Spleen (tissue), 13 donors: ENCODE measurements at regions of chr5 and their contacts with region 1.

Region 1: DNA sequence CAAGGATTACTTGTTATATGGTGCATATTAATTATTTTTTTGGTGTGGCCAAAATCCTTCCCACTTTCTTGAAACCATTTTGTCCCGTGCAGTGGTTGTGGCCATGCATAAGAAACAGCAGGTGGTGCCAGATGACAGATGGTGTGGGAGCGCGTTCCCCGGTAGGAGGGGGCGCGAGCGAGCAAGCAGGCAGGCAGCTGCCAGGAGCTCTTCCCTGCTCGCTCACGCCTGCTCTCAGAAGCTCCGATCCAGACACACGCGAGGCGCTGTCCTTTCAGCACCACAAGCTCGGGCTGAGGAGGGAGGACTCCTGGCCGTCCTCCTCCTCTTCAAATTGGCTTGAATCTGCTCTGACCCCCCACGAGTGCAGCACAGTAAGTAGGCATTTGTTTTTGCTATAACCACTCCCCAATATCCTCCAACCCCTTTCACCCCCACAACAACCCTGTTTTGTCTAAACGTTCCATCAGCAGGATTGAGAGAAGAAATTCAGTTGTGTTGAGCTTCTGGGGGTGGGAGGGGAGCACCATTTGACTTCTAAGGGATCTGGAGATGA is at the start of gene NSG2:
- DNase-seq: no peak
- H3K4me3 ChIP-seq: no peak within 1 kb of the TSS
- H3K27ac ChIP-seq: no peak within 1 kb of the TSS
- H3K4me1 ChIP-seq: no peaks in the 10 kb centered on the region
- H3K27me3 ChIP-seq: peaks cover 0 to 59% (median 0%) of the 10 kb centered on the region in 7 donors
- CTCF ChIP-seq: peak in 8 of 11 experiments; percentile 18 to 52 (median 32)
- POLR2A ChIP-seq: no peak
- total RNA-seq, gene NSG2: 0.41 to 0.60 TPM in 2 of 7 donors, not detected in the others

Region 2: DNA sequence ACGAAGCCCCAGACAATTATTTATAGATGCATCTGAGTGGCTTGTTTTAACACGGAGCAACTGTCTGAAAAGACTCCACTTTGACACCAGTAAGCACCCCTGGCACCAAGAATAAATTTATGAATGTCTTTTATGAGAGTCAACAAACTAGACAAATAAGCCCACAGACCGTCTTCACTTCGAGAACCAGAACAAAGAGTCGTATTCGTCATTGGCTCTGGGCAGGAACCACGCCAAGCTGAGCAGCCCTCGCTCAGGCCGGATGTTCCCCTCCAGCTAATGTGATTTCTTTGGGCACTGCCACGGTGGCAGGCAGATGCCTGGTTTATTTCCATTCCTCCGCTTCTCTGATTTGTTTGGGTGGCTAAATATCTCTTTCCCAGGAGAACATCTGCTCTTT is 625.4 kb before region 1 on chr5:
- intact Hi-C with region 1: no loop called
- DNase-seq: no peak
- H3K4me3 ChIP-seq: no peak overlapping the region
- H3K27ac ChIP-seq: no peak overlapping the region
- H3K4me1 ChIP-seq: no peaks in the 10 kb centered on the region
- H3K27me3 ChIP-seq: no peaks in the 10 kb centered on the region
- CTCF ChIP-seq: no peak
- POLR2A ChIP-seq: no peak

Region 3: GRCh38 chr5:174204535-174205313 is 159.2 kb after region 1 on chr5:
- intact Hi-C with region 1: no loop called
- DNase-seq: no peak
- H3K4me3 ChIP-seq: no peak overlapping the region
- H3K27ac ChIP-seq: no peak overlapping the region
- H3K4me1 ChIP-seq: no peaks in the 10 kb centered on the region
- H3K27me3 ChIP-seq: peaks cover 0 to 14% (median 0%) of the 10 kb centered on the region in 7 donors
- CTCF ChIP-seq: no peak
- POLR2A ChIP-seq: no peak

Region 4: GRCh38 chr5:174222891-174223290 is 177.3 kb after region 1 on chr5:
- intact Hi-C with region 1: no loop called
- DNase-seq: no peak
- H3K4me3 ChIP-seq: no peak overlapping the region
- H3K27ac ChIP-seq: no peak overlapping the region
- H3K4me1 ChIP-seq: no peaks in the 10 kb centered on the region
- H3K27me3 ChIP-seq: peaks cover 0 to 24% (median 0%) of the 10 kb centered on the region in 7 donors
- CTCF ChIP-seq: no peak
- POLR2A ChIP-seq: no peak

Region 5: DNA sequence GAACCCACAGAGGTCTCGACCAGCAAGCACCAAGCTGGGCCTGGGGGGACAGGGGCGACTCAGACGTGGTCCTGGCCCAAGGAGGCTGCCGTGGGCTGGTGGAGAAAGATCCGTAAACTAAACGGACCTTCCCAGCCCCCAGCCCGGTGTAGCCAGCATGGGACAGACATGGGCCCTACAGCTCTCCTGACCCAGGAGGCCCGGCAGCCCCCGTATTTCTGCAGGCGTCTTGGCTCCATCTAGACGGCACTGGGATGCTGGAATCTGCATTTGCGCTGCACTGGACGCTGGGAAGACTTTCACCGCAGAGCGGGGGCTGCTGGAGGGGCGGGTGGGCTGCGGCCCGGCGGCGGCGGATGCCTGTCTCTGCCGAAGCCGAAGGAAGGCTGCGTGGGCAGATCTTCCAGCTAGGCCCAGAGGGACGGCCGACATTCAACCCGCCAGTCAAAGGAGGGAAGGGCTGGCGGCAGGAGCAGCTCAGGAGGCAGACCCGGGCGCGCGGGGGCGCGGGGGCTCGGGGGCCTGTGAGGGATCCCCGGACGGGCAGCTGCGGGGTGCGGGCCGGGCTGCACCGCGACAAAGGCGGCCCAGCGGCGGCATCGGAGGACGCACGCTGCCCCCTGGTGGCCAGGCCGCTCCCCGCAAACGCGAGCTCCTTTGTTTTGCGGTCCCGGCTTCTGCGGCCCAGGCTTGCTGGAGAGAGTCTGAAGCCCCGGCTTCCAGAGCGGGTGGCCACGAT is 266.2 kb after region 1 on chr5:
- intact Hi-C with region 1: loop called (anchors 5 kb)
- DNase-seq: peak; percentile 86
- H3K4me3 ChIP-seq: peak overlapping the region in 6 of 8 donors; percentile 5 to 62 (median 28)
- H3K27ac ChIP-seq: no peak overlapping the region
- H3K4me1 ChIP-seq: peaks cover 0 to 12% (median 9%) of the 10 kb centered on the region in 6 donors
- H3K27me3 ChIP-seq: peaks cover 0 to 93% (median 19%) of the 10 kb centered on the region in 7 donors
- CTCF ChIP-seq: peak in 10 of 11 experiments; percentile 30 to 86 (median 76)
- POLR2A ChIP-seq: no peak

Region 6: DNA sequence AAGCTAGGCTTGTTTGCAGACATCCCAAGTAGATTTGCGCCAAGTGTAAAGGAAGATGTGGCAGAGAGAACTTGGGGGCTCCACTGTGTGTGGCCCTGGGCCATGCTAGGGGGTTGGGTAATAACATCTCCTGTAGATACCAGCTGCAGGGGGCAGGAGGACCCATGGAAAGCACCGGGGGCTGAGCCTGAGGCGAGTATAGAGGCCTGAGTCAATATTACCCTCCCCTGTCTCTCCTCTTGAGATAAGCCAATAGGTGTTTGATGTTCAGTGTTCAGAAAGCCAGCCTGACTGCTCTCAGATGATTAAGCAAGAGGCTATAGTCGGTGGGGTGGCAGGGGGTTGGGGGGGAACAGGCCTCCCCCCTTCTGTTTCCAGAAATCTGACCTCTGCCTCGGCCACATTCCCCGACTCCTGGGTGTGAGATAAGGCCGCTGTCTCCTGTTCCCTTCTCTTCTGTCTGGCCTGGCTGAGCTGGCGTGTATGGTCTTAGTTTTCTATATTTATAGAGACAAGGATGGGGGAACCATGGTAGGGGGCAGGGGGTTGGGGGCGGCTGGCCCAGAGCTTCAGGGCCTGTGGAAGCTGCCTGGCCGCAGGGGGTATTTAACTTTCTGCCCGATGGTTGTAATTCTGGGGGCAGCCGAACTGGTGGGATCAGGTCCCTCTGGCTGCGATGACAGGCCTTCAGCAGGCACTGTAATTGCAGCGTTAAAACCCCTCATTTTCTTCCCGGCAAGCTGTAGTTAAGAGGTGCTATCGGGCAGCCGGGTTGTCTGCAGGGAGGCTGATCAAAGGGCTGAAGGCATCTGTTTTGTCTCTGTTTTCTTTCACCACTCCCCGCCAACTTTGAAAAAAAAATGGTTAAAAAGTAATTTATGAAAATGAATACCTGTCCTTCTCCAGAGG is 292.0 kb after region 1 on chr5:
- intact Hi-C with region 1: no loop called
- DNase-seq: no peak
- H3K4me3 ChIP-seq: no peak overlapping the region
- H3K27ac ChIP-seq: no peak overlapping the region
- H3K4me1 ChIP-seq: no peaks in the 10 kb centered on the region
- H3K27me3 ChIP-seq: peaks cover 0 to 57% (median 13%) of the 10 kb centered on the region in 7 donors
- CTCF ChIP-seq: no peak
- POLR2A ChIP-seq: no peak